GM12878 (cell line): ENCODE measurements at regions of chr3 and their contacts with region 1.

Region 1: DNA sequence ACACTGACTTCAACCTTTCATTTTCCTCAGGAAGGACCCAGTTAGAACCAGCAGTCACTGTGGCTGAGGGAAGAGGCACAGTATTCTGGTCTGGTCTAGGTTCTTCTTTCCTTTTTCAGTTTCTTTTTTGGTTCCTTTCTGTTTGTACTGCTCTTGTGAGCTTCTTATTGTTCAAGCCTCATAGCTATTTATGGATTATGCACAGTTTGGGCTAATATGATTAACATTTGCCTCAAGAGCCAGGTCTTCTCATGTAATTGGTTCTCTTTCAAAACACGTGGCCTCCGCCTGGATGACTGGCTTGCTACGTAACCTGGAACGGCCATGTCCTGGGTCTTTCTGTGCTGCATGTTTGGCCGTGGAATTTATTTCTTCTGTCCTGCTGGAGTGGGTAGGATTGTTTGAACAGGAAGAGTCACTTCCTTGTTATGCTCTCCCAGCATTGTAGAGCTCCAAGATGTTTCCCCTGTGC is 43.3 kb downstream of the RBMS3 start:
- DNase-seq: peak; percentile 84
- ATAC-seq: peak; percentile 95
- H3K4me3 ChIP-seq: no peak overlapping the region
- H3K27ac ChIP-seq: peak overlapping the region; percentile 70
- H3K4me1 ChIP-seq: peaks cover 10% of the 10 kb centered on the region; the same call in 1 of the 2 replicates
- H3K27me3 ChIP-seq: no peaks in the 10 kb centered on the region
- CTCF ChIP-seq: no peak
- EP300 ChIP-seq: no peak
- POLR2A ChIP-seq: no peak
- RAD21 ChIP-seq: no peak

Region 2: DNA sequence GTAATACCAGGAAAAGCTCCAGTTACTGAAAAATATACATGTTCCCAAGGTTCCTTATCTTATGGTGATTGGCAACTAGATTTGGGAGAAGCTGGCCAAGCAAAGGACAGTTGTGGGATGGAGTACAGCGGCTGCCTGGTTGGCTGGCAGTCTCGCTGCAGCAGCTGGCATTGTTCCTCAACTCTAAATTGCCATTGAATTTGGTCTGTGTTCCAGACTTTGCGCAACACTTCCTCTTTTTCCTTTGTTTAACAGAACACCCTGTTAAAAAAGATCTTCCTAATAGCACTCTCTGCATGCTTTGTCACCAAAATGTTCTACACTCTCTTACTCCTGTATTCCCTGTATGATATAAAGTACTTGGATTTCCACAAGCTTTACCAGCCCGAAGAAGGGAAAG is 463.9 kb before region 1 on chr3:
- CTCF ChIA-PET with region 1: no interaction called
- POLR2A ChIA-PET with region 1: no interaction called
- RAD21 ChIA-PET with region 1: no interaction called
- SMC1A ChIA-PET with region 1: no interaction called
- in situ Hi-C with region 1: no loop called
- intact Hi-C with region 1: no loop called
- DNase-seq: no peak
- ATAC-seq: no peak
- H3K4me3 ChIP-seq: no peak overlapping the region
- H3K27ac ChIP-seq: no peak overlapping the region
- H3K4me1 ChIP-seq: no peaks in the 10 kb centered on the region
- H3K27me3 ChIP-seq: peaks cover 0 to 2% of the 10 kb centered on the region in 2 experiments; a peak in 1 of 4 replicates
- CTCF ChIP-seq: no peak
- EP300 ChIP-seq: no peak
- POLR2A ChIP-seq: no peak
- RAD21 ChIP-seq: no peak

Region 3: DNA sequence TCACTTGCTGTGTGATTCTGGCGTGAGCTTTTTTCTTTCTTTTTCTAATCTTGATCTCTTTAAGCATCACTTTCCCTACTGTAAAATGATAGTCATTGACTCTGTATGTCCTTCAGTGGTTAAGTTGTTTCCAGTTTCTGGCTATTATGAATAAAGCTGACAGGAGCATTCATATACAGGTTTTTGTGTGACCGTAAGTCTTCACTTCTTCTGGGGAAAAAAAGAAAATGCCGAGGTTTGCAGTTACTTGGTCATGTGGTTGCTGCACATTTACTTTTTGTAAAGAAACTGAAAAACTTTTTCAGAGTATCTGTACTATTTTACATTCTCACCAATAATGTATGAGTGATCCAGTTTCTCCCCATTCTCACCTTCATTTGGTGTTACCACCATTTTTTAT is 290.7 kb before region 1 on chr3:
- CTCF ChIA-PET with region 1: no interaction called
- POLR2A ChIA-PET with region 1: no interaction called
- RAD21 ChIA-PET with region 1: no interaction called
- SMC1A ChIA-PET with region 1: no interaction called
- in situ Hi-C with region 1: no loop called
- intact Hi-C with region 1: no loop called
- DNase-seq: no peak
- ATAC-seq: no peak
- H3K4me3 ChIP-seq: no peak overlapping the region
- H3K27ac ChIP-seq: no peak overlapping the region
- H3K4me1 ChIP-seq: no peaks in the 10 kb centered on the region
- H3K27me3 ChIP-seq: no peaks in the 10 kb centered on the region
- CTCF ChIP-seq: no peak
- EP300 ChIP-seq: no peak
- POLR2A ChIP-seq: no peak
- RAD21 ChIP-seq: no peak

Region 4: DNA sequence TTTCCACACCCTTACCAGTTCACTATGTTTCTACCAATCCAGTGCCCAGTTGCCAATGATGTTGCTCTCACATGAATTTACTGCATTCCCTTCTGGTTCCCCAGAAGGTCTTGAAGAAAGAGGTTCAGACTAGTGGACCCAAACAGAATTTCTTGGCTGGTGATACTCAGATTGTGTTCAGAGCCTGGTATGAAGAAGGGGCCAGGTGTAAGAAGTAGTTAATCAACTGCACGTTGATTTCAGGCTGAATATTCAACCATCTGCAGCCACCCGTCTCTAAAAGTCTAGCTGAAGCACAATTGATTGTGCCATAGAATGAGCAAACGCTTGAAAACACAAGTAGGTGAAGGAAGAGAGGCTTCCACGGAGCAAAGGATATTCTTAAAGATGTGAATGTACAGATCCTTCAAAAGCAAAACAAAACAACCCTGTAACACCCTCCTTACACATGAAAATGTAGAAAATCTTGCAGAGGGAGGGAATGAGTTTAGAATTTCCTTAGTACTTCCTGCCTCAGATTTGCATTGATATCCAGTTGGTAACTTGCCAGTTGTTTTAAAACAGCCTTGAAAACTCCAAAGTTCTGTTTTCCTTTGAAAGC is 38.6 kb before region 1 on chr3:
- CTCF ChIA-PET with region 1: interaction called, 7 read pairs
- POLR2A ChIA-PET with region 1: interaction called, 13 read pairs
- RAD21 ChIA-PET with region 1: interaction called, 22 read pairs
- SMC1A ChIA-PET with region 1: interaction called, 307 read pairs
- in situ Hi-C with region 1: no loop called
- intact Hi-C with region 1: loop called (anchors 2 kb)
- DNase-seq: no peak
- ATAC-seq: no peak
- H3K4me3 ChIP-seq: peak overlapping the region; percentile 45; the same call in 1 of the 2 replicates
- H3K27ac ChIP-seq: peak overlapping the region; percentile 27
- H3K4me1 ChIP-seq: peaks cover 4% of the 10 kb centered on the region; the same call in 1 of the 2 replicates
- H3K27me3 ChIP-seq: no peaks in the 10 kb centered on the region
- CTCF ChIP-seq: no peak
- EP300 ChIP-seq: no peak
- POLR2A ChIP-seq: no peak
- RAD21 ChIP-seq: no peak

Region 5: GRCh38 chr3:29297998-29298397 is 26.2 kb before region 1 on chr3:
- CTCF ChIA-PET with region 1: interaction called, 4 read pairs
- POLR2A ChIA-PET with region 1: interaction called, 10 read pairs
- RAD21 ChIA-PET with region 1: interaction called, 6 read pairs
- SMC1A ChIA-PET with region 1: interaction called, 307 read pairs
- in situ Hi-C with region 1: no loop called
- intact Hi-C with region 1: no loop called
- DNase-seq: no peak
- ATAC-seq: peak; percentile 64
- H3K4me3 ChIP-seq: no peak overlapping the region
- H3K27ac ChIP-seq: no peak overlapping the region
- H3K4me1 ChIP-seq: no peaks in the 10 kb centered on the region
- H3K27me3 ChIP-seq: no peaks in the 10 kb centered on the region
- CTCF ChIP-seq: no peak
- EP300 ChIP-seq: no peak
- POLR2A ChIP-seq: no peak
- RAD21 ChIP-seq: no peak

Region 6: DNA sequence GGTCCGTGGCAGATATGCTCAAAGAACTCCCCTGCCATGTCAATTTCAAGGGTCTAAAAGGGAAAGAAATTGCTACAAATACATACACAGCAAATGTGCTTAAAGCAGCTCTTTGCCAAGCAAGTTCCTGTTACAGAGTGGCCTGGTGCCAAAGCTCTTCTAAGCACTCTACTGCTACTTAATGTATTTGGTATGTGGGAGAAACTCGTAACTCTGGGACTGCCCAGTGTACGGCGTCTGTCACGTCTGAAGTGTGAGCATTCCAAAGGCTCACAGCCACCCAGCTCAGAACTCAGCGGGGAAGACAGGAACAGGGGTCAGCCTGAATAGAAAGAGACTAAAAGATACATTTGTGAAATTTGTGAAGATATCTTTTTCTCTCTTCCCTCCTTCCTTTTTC is 11.2 kb after region 1 on chr3:
- CTCF ChIA-PET with region 1: interaction called, 6 read pairs
- POLR2A ChIA-PET with region 1: interaction called, 14 read pairs
- RAD21 ChIA-PET with region 1: interaction called, 51 read pairs
- SMC1A ChIA-PET with region 1: interaction called, 190 read pairs
- in situ Hi-C with region 1: no loop called
- intact Hi-C with region 1: no loop called
- DNase-seq: no peak
- ATAC-seq: peak; percentile 47
- H3K4me3 ChIP-seq: no peak overlapping the region
- H3K27ac ChIP-seq: no peak overlapping the region
- H3K4me1 ChIP-seq: no peaks in the 10 kb centered on the region
- H3K27me3 ChIP-seq: no peaks in the 10 kb centered on the region
- CTCF ChIP-seq: no peak
- EP300 ChIP-seq: no peak
- POLR2A ChIP-seq: no peak
- RAD21 ChIP-seq: no peak

Region 7: GRCh38 chr3:29347412-29347811 is 23.2 kb after region 1 on chr3:
- CTCF ChIA-PET with region 1: interaction called, 3 read pairs
- POLR2A ChIA-PET with region 1: interaction called, 6 read pairs
- RAD21 ChIA-PET with region 1: interaction called, 7 read pairs
- SMC1A ChIA-PET with region 1: interaction called, 15 read pairs
- in situ Hi-C with region 1: no loop called
- intact Hi-C with region 1: no loop called
- DNase-seq: no peak
- ATAC-seq: no peak
- H3K4me3 ChIP-seq: no peak overlapping the region
- H3K27ac ChIP-seq: no peak overlapping the region
- H3K4me1 ChIP-seq: no peaks in the 10 kb centered on the region
- H3K27me3 ChIP-seq: no peaks in the 10 kb centered on the region
- CTCF ChIP-seq: no peak
- EP300 ChIP-seq: no peak
- POLR2A ChIP-seq: no peak
- RAD21 ChIP-seq: no peak

Region 8: DNA sequence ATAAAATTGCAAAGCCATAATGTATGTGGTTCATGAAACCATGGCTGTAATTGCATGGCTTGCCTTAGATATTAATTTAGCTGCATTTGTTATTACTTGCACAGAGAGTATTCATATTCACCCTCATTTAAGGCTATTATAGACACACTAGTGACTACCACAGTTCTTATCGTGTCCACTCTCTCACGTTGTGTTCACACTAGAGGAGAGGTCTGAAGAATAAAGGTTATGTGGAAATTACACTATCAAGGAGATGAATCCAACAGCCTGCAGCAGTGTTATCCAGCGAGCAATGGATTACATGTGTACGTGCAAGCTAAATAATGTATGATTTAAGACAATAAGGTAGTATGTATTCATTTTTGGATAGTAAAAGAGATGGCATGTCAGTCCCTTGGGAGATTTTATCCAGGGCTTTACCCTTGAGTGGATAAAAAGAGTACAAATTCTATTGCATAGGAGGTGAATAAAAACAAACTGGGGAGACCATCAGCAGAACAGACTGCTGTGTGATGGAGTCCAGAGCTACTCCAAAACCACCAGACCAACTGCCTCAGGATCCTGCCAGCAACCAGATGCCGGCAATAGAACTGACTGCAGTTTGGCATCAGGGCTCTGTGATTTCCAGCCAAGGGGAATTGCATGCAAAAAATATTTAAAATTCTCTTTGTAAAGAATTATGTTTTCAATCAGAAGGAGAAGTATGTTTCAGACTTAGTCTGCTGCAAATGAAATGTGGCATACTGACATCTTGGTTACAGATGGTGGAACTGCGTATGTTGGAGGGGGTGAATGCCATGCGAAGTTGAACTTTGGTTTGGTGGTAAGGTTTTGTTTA is 103.3 kb after region 1 on chr3:
- CTCF ChIA-PET with region 1: no interaction called
- POLR2A ChIA-PET with region 1: interaction called, 3 read pairs
- RAD21 ChIA-PET with region 1: interaction called, 4 read pairs
- SMC1A ChIA-PET with region 1: interaction called, 10 read pairs
- in situ Hi-C with region 1: no loop called
- intact Hi-C with region 1: no loop called
- DNase-seq: no peak
- ATAC-seq: no peak
- H3K4me3 ChIP-seq: no peak overlapping the region
- H3K27ac ChIP-seq: no peak overlapping the region
- H3K4me1 ChIP-seq: no peaks in the 10 kb centered on the region
- H3K27me3 ChIP-seq: no peaks in the 10 kb centered on the region
- CTCF ChIP-seq: no peak
- EP300 ChIP-seq: no peak
- POLR2A ChIP-seq: no peak
- RAD21 ChIP-seq: no peak

Region 9: GRCh38 chr3:29453284-29454001 is 129.2 kb after region 1 on chr3:
- CTCF ChIA-PET with region 1: no interaction called
- POLR2A ChIA-PET with region 1: no interaction called
- RAD21 ChIA-PET with region 1: no interaction called
- SMC1A ChIA-PET with region 1: no interaction called
- in situ Hi-C with region 1: no loop called
- intact Hi-C with region 1: no loop called
- DNase-seq: no peak
- ATAC-seq: no peak
- H3K4me3 ChIP-seq: no peak overlapping the region
- H3K27ac ChIP-seq: no peak overlapping the region
- H3K4me1 ChIP-seq: no peaks in the 10 kb centered on the region
- H3K27me3 ChIP-seq: no peaks in the 10 kb centered on the region
- CTCF ChIP-seq: no peak
- EP300 ChIP-seq: no peak
- POLR2A ChIP-seq: no peak
- RAD21 ChIP-seq: no peak

Region 10: DNA sequence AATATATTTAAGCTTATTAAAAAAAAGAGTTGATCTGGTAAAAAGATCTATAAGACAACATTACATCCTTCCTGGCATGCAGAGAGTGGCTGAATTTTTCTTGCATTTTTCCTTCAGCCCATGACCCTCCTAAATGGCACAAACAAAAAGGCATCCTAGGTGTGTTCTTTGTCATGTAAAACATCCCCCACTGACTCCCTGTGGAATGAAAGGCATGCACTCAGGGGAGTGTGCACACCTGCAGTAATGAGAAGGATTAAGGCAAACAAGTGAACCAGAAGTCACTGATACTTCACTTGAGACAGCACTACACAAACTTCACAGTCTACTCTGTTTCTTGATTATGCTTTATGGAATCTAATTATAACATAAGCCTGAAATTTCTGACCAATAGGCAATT is 151.6 kb after region 1 on chr3:
- CTCF ChIA-PET with region 1: no interaction called
- POLR2A ChIA-PET with region 1: no interaction called
- RAD21 ChIA-PET with region 1: no interaction called
- SMC1A ChIA-PET with region 1: no interaction called
- in situ Hi-C with region 1: no loop called
- intact Hi-C with region 1: no loop called
- DNase-seq: no peak
- ATAC-seq: no peak
- H3K4me3 ChIP-seq: no peak overlapping the region
- H3K27ac ChIP-seq: no peak overlapping the region
- H3K4me1 ChIP-seq: no peaks in the 10 kb centered on the region
- H3K27me3 ChIP-seq: no peaks in the 10 kb centered on the region
- CTCF ChIP-seq: no peak
- EP300 ChIP-seq: no peak
- POLR2A ChIP-seq: no peak
- RAD21 ChIP-seq: no peak